Activated T-helper 1 cell treated with anti-CD3 and anti-CD28 coated beads, Interleukin-12 subunit alpha, Interleukin-12 subunit beta, Interleukin-2, Interleukin-4 antibody, amounts not matched to agents 30 ng/mL and 10 ng/mL and 1 ng/mL, durations not matched to agents 14 hours and 24 hours and 36 hours (primary cell): ENCODE measurements at regions of chr14 and their contacts with region 1.

Region 1: DNA sequence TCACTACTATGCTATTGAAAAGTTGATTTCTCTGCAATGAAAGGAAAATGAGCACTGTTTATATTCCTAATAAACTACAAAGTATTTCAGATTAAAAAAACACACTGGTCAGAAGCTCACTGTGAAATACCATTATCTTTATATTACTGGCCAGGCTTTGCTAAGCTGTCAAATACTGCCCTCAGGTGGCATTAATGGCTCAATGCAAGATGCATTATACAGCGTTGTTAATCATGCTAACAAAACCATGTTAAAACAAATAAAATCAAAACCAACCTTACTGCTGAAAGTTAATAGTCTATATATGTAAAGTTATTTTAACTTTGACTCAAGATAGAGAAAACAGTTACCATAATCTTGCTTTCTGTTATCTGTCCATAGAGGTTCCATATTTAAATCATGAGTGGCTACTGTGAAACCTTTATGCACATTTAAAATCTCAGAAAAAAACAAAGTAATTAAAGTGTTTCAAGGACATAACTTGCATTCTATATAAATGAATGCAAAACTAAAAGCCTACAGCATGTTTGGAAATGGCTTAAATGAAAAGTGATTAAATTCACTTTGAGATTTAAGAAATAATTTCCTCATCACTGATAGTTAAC is 121.7 kb downstream of the RALGAPA1 start:
- DNase-seq: no peak
- H3K4me3 Mint-ChIP-seq: no peak overlapping the region
- H3K27ac Mint-ChIP-seq: no peak overlapping the region
- H3K4me1 Mint-ChIP-seq: peaks cover 25% of the 10 kb centered on the region
- H3K27me3 Mint-ChIP-seq: no peaks in the 10 kb centered on the region

Region 2: DNA sequence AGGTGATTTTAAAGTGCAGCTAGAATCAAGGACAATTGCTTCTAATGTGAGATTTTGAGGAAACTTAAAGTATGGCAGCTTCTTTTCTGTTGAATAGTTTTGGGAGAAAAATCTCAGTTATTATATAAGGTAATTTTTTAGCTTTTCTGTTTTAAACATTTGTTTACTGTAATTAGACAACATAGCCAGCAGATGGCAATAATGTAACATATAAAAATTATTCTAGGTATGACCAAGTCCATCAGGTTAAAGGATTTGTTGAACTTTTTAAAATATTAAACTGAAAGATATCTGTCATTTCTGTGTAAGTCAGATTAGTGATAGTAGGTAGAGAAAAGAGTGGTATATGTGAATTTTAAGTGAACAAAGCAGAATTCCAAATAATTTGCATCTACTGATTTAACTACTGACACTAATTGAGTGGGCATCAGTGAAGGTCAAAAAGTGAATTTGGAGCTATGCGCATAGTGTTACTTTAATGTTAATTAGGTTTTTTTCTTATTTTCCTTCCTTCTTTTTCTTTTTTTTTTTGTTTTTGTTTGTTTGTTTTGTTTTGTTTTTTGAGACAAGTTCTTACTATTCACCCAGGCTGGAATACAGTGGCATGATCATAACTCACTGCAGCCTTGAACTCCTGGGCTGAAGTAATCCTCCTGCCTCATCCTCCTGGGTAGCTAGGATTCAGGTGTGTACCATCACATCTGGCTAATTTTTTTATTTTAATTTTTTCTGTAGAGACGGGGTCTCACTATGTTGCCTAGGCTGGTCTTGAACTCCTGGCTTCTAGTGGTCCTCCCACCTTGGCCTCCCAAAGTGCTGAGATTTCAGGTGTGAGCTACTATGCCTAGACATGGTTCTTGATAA is 546.5 kb before region 1 on chr14:
- intact Hi-C with region 1: loop called (anchors 2 kb)
- DNase-seq: no peak
- H3K4me3 Mint-ChIP-seq: no peak overlapping the region
- H3K27ac Mint-ChIP-seq: no peak overlapping the region
- H3K4me1 Mint-ChIP-seq: peaks cover 29% of the 10 kb centered on the region
- H3K27me3 Mint-ChIP-seq: no peaks in the 10 kb centered on the region

Region 3: DNA sequence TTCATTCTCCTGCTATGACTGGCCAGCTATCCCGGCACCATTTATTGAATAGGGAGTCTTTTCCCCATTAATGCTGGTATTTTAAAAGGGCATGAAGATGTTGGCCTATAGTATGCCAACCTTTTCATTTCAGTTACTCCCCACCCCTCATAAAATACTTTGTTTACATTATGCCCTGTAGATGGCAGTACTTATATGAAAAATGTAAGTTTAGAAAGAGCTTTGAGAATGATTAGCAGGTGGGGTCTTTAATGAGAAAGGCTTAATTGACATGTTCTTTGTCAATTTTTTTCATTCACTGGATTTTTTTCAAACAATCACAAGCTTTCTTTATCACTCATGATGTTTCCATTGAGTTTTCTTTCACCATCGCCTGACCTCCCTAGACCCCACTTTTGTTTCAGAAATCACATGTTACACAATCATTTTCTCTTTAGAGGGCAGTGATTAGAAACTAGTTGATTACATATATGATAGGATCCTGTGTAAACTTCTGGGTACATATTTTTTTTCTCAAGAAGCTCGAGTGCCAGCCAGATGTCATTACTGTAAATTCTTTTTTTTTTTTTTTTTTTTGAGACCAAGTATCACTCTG is 457.8 kb before region 1 on chr14:
- intact Hi-C with region 1: loop called (anchors 5 kb)
- DNase-seq: no peak
- H3K4me3 Mint-ChIP-seq: no peak overlapping the region
- H3K27ac Mint-ChIP-seq: no peak overlapping the region
- H3K4me1 Mint-ChIP-seq: peaks cover 42% of the 10 kb centered on the region
- H3K27me3 Mint-ChIP-seq: no peaks in the 10 kb centered on the region

Region 4: DNA sequence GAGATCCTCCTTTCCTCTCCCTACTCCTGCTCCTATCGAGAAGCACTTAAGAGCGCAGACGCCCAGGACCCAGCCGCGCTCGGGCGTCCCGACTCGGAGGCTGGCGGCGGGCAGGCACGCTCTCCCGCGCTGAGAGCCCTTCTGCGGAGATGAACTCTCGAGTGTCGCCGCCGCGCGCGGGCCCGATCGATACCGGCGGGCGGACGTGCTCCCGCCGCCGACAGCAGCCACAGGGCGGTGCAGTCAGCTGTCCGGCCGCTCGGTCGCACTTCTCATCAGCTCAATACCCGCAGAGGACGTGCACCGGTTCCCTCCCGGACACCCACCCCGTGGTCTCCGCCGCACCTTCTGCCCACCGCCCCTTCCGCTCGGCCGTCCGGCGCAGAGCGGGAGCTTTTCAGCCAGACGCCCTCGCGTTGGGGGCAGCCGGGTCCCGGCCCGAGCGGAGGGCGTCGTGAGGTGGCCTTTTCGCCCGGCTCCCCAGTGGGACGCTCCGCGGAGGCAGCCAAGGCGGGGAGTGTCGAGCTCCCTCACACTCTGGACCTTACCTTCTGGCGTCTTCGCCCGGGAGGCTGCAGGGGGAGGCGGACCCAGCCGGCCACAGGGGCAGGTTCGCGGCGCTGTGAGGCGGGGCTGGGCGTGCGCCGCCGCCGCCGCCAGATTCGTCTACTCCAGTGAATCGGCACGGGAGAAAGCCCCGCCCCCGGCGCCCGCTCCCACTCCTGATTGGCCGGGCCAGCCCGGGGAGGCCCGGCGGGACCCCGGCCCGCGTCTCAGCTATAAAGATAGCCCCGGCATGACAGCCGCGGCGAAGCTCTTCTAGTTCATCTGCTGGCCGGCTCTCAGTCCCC is 153.9 kb before region 1 on chr14 and contains the start of gene INSM2:
- intact Hi-C with region 1: loop called (anchors 2 kb)
- DNase-seq: peak; percentile 55
- H3K4me3 Mint-ChIP-seq: peak within 1 kb of the TSS; percentile 73
- H3K27ac Mint-ChIP-seq: no peak within 1 kb of the TSS
- H3K4me1 Mint-ChIP-seq: peaks cover 5% of the 10 kb centered on the region
- H3K27me3 Mint-ChIP-seq: peaks cover 55% of the 10 kb centered on the region
- total RNA-seq, gene INSM2: not detected in 2 replicates

Region 5: GRCh38 chr14:35808076-35808652 is 120.7 kb after region 1 on chr14:
- intact Hi-C with region 1: loop called (anchors 2 kb)
- DNase-seq: no peak
- H3K4me3 Mint-ChIP-seq: peak overlapping the region; percentile 100
- H3K27ac Mint-ChIP-seq: peak overlapping the region; percentile 97
- H3K4me1 Mint-ChIP-seq: peaks cover 29% of the 10 kb centered on the region
- H3K27me3 Mint-ChIP-seq: peaks cover 3% of the 10 kb centered on the region